Activated T-helper 1 cell treated with anti-CD3 and anti-CD28 coated beads, Interleukin-12 subunit alpha, Interleukin-12 subunit beta, Interleukin-2, Interleukin-4 antibody, amounts not matched to agents 30 ng/mL and 10 ng/mL and 1 ng/mL, durations not matched to agents 14 hours and 24 hours and 36 hours (primary cell): ENCODE measurements at regions of chr15 and their contacts with region 1.

Region 1: GRCh38 chr15:72783563-72784237 is at the start of gene ADPGK:
- DNase-seq: peak; percentile 95
- H3K4me3 Mint-ChIP-seq: peak within 1 kb of the TSS; percentile 92
- H3K27ac Mint-ChIP-seq: peak within 1 kb of the TSS; percentile 99
- H3K4me1 Mint-ChIP-seq: peaks cover 68% of the 10 kb centered on the region
- H3K27me3 Mint-ChIP-seq: no peaks in the 10 kb centered on the region
- total RNA-seq, gene ADPGK: 94.0 and 101 TPM in 2 replicates

Region 2: DNA sequence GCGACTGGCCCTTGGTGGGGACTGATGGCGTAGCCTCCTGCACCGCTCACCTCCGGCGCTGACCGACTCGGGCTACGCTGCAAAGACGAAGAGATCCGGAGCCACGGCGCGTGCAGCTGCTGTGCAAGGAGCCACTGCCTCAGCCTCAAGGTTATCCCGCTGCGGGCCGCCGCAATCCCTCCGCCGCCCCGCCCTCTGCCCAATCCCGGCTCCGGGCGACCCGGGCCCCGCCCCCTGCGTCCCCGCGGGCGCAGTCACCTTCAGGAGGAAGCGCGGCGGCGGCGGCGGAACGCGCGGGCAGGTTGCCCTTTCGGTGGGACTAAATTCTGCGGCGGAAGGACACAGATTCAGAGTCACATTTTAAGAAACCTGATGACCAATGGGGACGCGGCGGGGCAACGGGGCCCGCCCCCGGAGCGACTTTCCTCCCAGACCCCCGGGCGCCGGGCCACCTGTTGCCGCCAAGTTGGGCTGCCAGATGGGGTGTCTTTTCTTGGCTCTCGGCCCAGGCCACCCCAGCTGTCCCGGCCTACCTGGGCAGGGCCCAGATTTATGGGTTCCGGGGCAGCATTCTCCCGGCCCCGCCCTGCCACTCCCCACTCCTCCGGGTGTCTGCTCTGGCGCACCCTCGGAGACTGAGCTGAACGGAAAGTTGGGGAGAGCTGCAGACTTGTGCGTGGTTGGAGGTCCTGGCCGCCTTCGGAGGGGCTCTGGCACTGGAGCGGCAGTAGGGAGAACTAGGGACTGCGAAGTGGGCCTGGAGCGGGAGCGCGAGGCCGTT is 552.4 kb before region 1 on chr15 and contains the start of gene PKM:
- intact Hi-C with region 1: loop called (anchors 2 kb)
- DNase-seq: peak; percentile 95
- H3K4me3 Mint-ChIP-seq: peak within 1 kb of the TSS; percentile 98
- H3K27ac Mint-ChIP-seq: peak within 1 kb of the TSS; percentile 100
- H3K4me1 Mint-ChIP-seq: peaks cover 40% of the 10 kb centered on the region
- H3K27me3 Mint-ChIP-seq: no peaks in the 10 kb centered on the region
- total RNA-seq, gene PKM: 2,409 and 2,442 TPM in 2 replicates

Region 3: GRCh38 chr15:72473614-72474465 is 309.9 kb before region 1 on chr15 and contains the start of gene ARIH1:
- intact Hi-C with region 1: loop called (anchors 2 kb)
- DNase-seq: peak; percentile 95
- H3K4me3 Mint-ChIP-seq: peak within 1 kb of the TSS; percentile 95
- H3K27ac Mint-ChIP-seq: peak within 1 kb of the TSS; percentile 99
- H3K4me1 Mint-ChIP-seq: peaks cover 33% of the 10 kb centered on the region
- H3K27me3 Mint-ChIP-seq: no peaks in the 10 kb centered on the region
- total RNA-seq, gene ARIH1: 140 and 144 TPM in 2 replicates

Region 4: DNA sequence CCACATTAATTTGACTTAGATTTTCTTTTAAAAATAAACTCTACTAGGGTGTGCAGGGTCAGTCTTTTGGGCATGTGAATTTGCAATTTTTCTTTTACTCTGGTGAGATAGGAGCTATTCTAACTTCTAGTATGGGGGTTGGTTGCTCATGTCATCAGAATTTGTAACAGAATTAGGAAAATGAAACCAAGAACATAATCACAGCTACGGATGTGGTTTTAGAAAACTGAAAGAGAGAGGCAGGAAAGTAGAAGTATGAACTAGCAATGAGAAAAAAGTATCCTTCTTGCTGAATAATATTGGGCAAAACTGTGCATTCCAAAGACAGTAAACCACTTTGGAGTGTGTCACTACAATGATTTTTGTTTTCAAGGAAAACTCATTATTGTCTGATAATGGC is 43.5 kb before region 1 on chr15:
- intact Hi-C with region 1: loop called (anchors 1 kb)
- DNase-seq: no peak
- H3K4me3 Mint-ChIP-seq: peak overlapping the region; percentile 26
- H3K27ac Mint-ChIP-seq: peak overlapping the region; percentile 41
- H3K4me1 Mint-ChIP-seq: peaks cover 39% of the 10 kb centered on the region
- H3K27me3 Mint-ChIP-seq: no peaks in the 10 kb centered on the region

Region 5: DNA sequence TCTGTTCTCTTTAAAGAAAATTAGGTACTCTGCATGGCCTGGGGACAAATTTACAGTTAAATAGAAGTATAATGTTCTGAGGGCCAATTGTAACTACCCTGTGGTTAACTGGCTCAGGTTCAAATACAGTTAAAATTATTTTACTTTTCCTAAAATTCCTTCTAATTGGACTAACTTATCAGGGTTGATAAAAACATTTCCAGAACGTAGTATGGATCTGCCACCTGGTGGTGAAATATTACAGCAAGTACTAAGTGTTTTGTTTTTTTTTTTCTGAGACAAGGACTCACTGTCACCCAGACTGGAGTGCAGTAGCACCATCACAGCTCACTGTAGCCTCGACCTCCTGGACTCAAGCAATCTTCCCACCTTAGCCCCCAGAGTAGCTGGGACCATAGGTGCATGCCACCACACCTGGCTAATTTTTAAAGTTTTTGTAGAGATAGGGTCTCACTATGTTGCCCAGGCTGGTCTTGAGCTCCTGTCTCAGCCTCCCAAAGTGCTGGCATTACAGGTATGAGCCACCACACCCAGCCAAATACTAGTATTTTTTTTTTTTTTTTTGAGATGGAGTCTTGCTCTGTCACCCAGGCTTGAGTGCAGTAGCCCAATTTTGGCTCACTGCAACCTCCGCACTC is 297.7 kb after region 1 on chr15:
- intact Hi-C with region 1: loop called (anchors 1 kb)
- DNase-seq: no peak
- H3K4me3 Mint-ChIP-seq: no peak overlapping the region
- H3K27ac Mint-ChIP-seq: no peak overlapping the region
- H3K4me1 Mint-ChIP-seq: no peaks in the 10 kb centered on the region
- H3K27me3 Mint-ChIP-seq: peaks cover 2% of the 10 kb centered on the region